Caco-2 (cell line): ENCODE measurements at regions of chr2 and their contacts with region 1.

Region 1: GRCh38 chr2:187842978-187843847 is 289.0 kb upstream of the TFPI start:
- DNase-seq: peak in 1 of 2 experiments; percentile 65
- H3K4me3 ChIP-seq: no peak overlapping the region
- H3K4me3 Mint-ChIP-seq: no peak overlapping the region
- H3K27ac Mint-ChIP-seq: no peak overlapping the region
- H3K4me1 ChIP-seq: no peaks in the 10 kb centered on the region
- H3K4me1 Mint-ChIP-seq: peaks cover 7% of the 10 kb centered on the region
- H3K27me3 ChIP-seq: no peaks in the 10 kb centered on the region
- H3K27me3 Mint-ChIP-seq: no peaks in the 10 kb centered on the region
- CTCF ChIP-seq: peak; percentile 67 to 69

Region 2: GRCh38 chr2:186862869-186863709 is 980.1 kb before region 1 on chr2:
- CTCF ChIA-PET with region 1: no interaction called
- POLR2A ChIA-PET with region 1: no interaction called
- intact Hi-C with region 1: loop called (anchors 10 kb)
- DNase-seq: peak in 1 of 2 experiments; percentile 24
- H3K4me3 ChIP-seq: no peak overlapping the region
- H3K4me3 Mint-ChIP-seq: no peak overlapping the region
- H3K27ac Mint-ChIP-seq: no peak overlapping the region
- H3K4me1 ChIP-seq: no peaks in the 10 kb centered on the region
- H3K4me1 Mint-ChIP-seq: no peaks in the 10 kb centered on the region
- H3K27me3 ChIP-seq: no peaks in the 10 kb centered on the region
- H3K27me3 Mint-ChIP-seq: peaks cover 8% of the 10 kb centered on the region
- CTCF ChIP-seq: peak; percentile 54 to 73

Region 3: DNA sequence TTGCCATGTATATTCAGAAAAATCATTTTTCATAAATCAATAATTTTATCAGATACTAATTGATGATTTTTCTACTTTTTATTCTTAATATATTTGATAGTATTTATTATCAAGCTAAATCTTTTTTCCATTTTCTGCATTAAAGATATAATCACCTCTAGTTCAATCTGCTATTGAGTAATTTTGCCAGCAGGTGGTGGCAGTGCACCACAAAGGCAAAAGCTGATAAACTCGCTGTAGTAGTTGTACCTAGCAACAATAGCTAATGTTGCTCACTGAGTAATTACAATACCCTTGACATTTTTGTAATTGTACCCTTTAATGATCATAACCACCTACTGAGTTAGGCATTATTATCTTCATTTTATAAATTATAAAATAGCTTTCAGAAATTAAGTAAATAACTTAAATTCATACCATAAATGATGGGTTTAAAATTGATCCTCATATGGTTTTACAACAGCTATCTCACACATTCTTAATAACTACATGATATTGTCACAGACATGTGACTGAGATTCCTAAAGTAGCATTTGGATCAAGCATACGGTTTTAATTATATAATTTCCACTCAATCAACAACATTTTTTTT is 343.2 kb before region 1 on chr2:
- CTCF ChIA-PET with region 1: interaction called, 15 read pairs
- POLR2A ChIA-PET with region 1: no interaction called
- intact Hi-C with region 1: loop called (anchors 1 kb)
- DNase-seq: peak; percentile 52 to 71
- H3K4me3 ChIP-seq: no peak overlapping the region
- H3K4me3 Mint-ChIP-seq: no peak overlapping the region
- H3K27ac Mint-ChIP-seq: no peak overlapping the region
- H3K4me1 ChIP-seq: peaks cover 7% of the 10 kb centered on the region; the same call in 1 of the 2 replicates
- H3K4me1 Mint-ChIP-seq: peaks cover 19% of the 10 kb centered on the region
- H3K27me3 ChIP-seq: no peaks in the 10 kb centered on the region
- H3K27me3 Mint-ChIP-seq: no peaks in the 10 kb centered on the region
- CTCF ChIP-seq: peak; percentile 80 to 91

Region 4: DNA sequence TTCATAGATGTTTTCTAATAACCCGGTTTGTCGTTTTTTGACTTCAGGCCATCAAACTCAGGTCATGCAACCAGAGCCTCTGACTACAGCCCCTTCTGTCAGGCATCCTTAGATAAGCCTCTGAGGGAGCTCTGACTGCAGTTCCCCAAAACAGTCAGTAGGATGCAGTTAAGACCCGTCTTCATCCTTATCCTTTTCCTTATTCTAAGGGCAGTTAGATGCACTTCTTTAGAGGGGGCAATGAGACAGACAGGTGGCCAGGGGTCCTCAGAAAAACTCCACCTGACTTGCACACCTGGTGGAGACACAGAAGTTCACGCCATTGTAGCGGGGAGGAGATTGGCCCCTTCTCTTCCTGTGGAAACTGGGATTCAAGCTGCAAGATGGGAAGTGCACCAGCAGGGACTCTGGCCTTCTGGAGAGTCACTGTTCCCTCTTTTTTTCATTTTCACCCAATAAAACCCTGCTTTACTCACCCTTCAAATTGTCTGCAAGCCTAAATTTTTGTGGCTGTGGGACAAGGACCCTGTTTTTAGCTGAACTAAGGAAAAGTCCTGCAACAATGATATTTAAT is 184.2 kb before region 1 on chr2:
- CTCF ChIA-PET with region 1: interaction called, 4 read pairs
- POLR2A ChIA-PET with region 1: no interaction called
- intact Hi-C with region 1: loop called (anchors 1 kb)
- DNase-seq: peak in 1 of 2 experiments; percentile 13
- H3K4me3 ChIP-seq: no peak overlapping the region
- H3K4me3 Mint-ChIP-seq: no peak overlapping the region
- H3K27ac Mint-ChIP-seq: no peak overlapping the region
- H3K4me1 ChIP-seq: no peaks in the 10 kb centered on the region
- H3K4me1 Mint-ChIP-seq: no peaks in the 10 kb centered on the region
- H3K27me3 ChIP-seq: no peaks in the 10 kb centered on the region
- H3K27me3 Mint-ChIP-seq: peaks cover 13% of the 10 kb centered on the region
- CTCF ChIP-seq: peak; percentile 35 to 47

Region 5: GRCh38 chr2:188478724-188479123 is 635.5 kb after region 1 on chr2:
- CTCF ChIA-PET with region 1: no interaction called
- POLR2A ChIA-PET with region 1: no interaction called
- intact Hi-C with region 1: no loop called
- DNase-seq: no peak
- H3K4me3 ChIP-seq: no peak overlapping the region
- H3K4me3 Mint-ChIP-seq: no peak overlapping the region
- H3K27ac Mint-ChIP-seq: no peak overlapping the region
- H3K4me1 ChIP-seq: no peaks in the 10 kb centered on the region
- H3K4me1 Mint-ChIP-seq: peaks cover 8% of the 10 kb centered on the region
- H3K27me3 ChIP-seq: no peaks in the 10 kb centered on the region
- H3K27me3 Mint-ChIP-seq: no peaks in the 10 kb centered on the region
- CTCF ChIP-seq: no peak